Mammary epithelial cell (primary cell): ENCODE measurements at regions of chr2 and their contacts with region 1.

Region 1: GRCh38 chr2:231674587-231675338 is 33.6 kb upstream of the PTMA start:
- DNase-seq: no peak
- H3K4me3 ChIP-seq: no peak overlapping the region
- H3K27ac ChIP-seq: no peak overlapping the region
- H3K4me1 ChIP-seq: peaks cover 25% of the 10 kb centered on the region
- H3K27me3 ChIP-seq: no peaks in the 10 kb centered on the region
- CTCF ChIP-seq: peak; percentile 58 to 91

Region 2: DNA sequence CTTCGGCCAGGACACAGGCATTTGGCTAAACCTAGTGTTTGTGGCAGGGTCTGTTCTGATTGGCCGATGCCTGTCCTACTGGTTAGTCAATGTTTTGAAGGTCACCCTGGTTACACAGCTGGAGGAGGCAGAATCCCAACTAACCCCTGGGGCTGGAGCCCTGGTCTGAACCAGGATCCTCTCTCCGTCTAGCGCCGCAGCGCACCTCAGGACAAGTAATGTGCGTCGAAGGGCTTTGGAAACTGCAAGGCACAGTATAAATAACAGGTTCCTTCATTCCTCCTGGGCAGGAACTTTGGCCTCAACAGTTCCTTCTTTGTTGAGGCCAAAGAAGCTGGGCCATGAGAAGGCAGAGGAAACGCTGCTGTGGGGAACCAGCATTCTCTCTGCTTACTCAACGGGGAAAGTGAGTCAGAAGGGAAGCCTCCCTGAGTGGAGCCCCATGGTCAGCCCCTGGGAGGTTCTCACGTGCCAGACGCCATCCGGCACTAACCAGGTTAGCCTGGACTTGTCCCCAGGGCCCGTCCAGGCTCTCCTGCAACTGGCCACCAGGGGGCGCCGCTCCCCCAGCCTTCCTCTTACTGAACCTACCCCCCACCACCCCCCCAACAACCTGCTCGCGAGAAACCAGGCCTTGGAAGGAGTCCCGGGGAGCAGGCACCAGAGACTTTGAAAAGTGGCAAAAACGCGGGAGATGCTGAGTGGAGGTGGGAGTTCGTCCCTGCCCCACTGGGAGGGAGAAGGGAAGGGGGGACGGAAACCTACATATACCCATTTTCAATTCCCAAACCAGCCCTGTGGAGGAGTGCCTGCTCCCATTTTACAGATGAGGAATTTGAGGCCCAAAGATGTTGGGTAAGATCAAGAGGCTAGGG is 62.3 kb before region 1 on chr2:
- CTCF ChIA-PET with region 1: interaction called, 16 read pairs
- dilution Hi-C with region 1: no loop called
- in situ Hi-C with region 1: loop called (anchors 5 kb)
- intact Hi-C with region 1: loop called (anchors 1 kb)
- DNase-seq: peak; percentile 97
- H3K4me3 ChIP-seq: no peak overlapping the region
- H3K27ac ChIP-seq: peak overlapping the region; percentile 98
- H3K4me1 ChIP-seq: peaks cover 41% of the 10 kb centered on the region
- H3K27me3 ChIP-seq: no peaks in the 10 kb centered on the region
- CTCF ChIP-seq: peak; percentile 71 to 94

Region 3: GRCh38 chr2:231662028-231662810 is 12.5 kb before region 1 on chr2:
- CTCF ChIA-PET with region 1: no interaction called
- dilution Hi-C with region 1: no loop called
- in situ Hi-C with region 1: no loop called
- intact Hi-C with region 1: no loop called
- DNase-seq: peak; percentile 92
- H3K4me3 ChIP-seq: peak overlapping the region in 2 of 3 experiments; percentile 45 to 49
- H3K27ac ChIP-seq: peak overlapping the region; percentile 53
- H3K4me1 ChIP-seq: peaks cover 18% of the 10 kb centered on the region
- H3K27me3 ChIP-seq: no peaks in the 10 kb centered on the region
- CTCF ChIP-seq: no peak

Region 4: DNA sequence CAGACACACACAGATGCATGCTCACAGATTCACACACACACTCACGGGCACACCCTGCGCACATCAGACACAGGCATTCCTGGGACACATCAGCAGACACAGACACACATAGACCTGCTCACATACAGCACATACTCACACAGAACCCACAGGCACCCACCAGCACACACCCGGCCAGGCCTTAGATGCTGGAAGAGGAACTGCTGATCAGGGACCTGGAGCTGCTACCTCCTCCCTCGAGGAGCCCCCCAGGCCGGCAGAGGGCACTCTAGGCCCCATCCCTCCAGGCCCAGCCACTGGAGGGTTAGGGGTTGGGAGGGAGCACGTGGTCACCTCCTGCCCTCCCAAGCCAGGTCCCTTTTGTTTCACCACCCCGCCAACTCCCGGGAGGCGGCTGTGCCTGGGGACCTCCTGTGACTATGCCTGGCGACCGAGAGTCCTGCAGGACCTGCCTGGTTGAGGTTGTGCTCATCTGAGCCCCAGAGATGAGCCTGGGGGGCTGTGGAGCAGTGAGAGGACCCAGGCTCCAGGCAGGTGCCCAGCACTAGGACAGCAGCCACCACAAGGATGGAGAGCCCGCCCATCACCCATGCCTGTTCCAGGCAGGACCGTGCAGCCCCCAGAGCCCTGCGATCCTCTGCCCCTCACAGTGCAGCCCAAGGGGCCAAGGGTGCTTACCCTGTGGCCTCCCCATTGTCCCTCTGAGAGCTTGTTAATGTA is 12.5 kb after region 1 on chr2:
- CTCF ChIA-PET with region 1: no interaction called
- dilution Hi-C with region 1: no loop called
- in situ Hi-C with region 1: no loop called
- intact Hi-C with region 1: no loop called
- DNase-seq: no peak
- H3K4me3 ChIP-seq: no peak overlapping the region
- H3K27ac ChIP-seq: no peak overlapping the region
- H3K4me1 ChIP-seq: no peaks in the 10 kb centered on the region
- H3K27me3 ChIP-seq: no peaks in the 10 kb centered on the region
- CTCF ChIP-seq: peak in 1 of 2 donors; percentile 56

Region 5: DNA sequence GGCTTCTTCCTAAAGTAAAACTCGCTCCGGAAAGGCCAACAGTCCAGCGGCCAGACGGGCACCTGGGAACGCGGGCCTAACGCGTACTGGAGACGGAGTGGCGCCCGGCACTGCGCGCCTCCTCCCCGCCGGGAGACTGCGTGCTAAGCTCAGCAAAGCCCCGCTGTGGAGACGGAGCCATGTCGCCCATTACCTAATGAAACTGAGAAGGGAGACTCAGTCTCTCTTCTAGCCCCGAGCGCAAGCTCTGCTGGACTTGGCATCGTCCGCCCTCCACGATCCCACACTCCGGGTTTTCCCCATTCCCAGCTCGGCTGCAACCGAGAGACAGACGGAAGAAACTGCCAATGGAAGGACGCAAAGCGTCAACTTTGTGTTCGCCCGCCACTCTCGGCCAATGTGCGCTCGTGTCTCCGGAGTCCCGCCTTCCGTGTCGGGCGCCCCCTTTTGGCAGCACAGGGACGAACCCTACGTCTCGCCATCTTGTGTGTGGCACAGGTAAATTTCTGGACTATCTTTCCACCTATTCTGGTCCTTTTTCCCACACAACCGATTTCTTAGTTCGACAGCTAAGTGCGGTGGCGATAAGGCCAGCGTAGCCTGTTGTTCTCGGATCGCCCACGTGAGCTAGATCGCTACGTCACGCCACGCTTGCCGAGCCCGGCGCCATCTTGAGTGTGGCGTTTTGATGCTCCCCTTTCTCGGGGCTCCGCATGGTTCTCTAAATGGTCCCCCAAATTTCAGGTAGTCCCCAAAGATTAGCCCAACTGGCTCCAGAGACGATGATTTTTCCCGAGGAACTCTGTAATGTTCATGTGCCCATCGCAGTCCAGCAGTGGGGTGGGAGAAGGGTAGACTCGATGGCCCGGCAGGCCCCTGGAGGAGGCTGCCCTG is 32.2 kb after region 1 on chr2:
- CTCF ChIA-PET with region 1: interaction called, 4 read pairs
- dilution Hi-C with region 1: no loop called
- in situ Hi-C with region 1: loop called in 1 of 2 experiments (anchors 5 kb)
- intact Hi-C with region 1: no loop called
- DNase-seq: peak; percentile 98
- H3K4me3 ChIP-seq: peak overlapping the region; percentile 54 to 76 (median 63)
- H3K27ac ChIP-seq: peak overlapping the region; percentile 94
- H3K4me1 ChIP-seq: peaks cover 25% of the 10 kb centered on the region
- H3K27me3 ChIP-seq: no peaks in the 10 kb centered on the region
- CTCF ChIP-seq: peak; percentile 93 to 95

Region 6: GRCh38 chr2:231720987-231721966 is 46.5 kb after region 1 on chr2:
- CTCF ChIA-PET with region 1: interaction called, 4 read pairs
- dilution Hi-C with region 1: no loop called
- in situ Hi-C with region 1: loop called in 1 of 2 experiments (anchors 5 kb)
- intact Hi-C with region 1: no loop called
- DNase-seq: no peak
- H3K4me3 ChIP-seq: no peak overlapping the region
- H3K27ac ChIP-seq: no peak overlapping the region
- H3K4me1 ChIP-seq: no peaks in the 10 kb centered on the region
- H3K27me3 ChIP-seq: no peaks in the 10 kb centered on the region
- CTCF ChIP-seq: no peak